ENCODE measurements at regions of chr6 and their contacts with region 1.

Region 1: DNA sequence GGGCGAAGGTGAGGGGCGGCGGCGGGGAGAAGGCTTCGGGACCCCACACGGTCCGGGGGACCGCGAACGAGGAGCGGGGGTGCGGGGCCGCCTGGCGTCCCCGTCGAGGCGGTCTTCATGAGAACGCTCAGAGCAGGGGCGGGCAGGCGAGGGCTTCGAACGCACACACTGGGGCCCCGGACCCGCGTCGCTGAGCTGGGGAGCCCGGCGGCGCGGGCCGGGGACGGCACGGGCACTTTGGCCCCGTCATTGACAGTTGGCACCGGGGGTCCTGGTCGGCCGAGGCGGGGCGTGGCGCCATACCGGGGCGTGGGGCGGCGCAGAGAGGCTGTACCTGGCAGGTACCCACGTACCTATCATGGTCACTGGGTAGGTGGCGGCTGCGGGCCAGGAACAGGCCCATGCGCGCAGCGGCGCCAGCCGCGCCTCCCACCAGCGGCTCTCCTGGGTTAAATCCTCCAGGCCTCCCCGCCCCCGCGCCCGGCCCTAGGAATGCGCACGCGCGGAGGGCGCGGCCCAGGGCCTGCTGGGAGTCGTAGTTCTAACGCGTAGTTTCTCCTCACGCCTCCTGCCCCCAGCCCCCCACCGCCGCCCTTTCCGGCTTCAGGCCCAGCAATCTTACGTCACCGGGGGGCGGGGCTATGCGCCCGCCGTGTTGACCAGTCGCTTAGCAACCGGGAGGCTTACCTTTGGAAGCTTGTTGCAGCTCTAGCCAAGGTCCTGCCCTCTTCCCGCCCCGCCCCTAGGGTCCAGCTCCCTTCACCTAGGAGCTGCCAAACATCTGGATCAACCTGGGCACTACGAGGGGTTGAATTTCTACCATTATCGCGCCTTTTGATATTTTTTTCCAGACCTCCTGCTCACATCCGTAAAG is at the starts of genes PACRG and PRKN:
- DNase-seq: peak; percentile 97
- ATAC-seq: peak; percentile 93
- H3K4me3 ChIP-seq: peak within 1 kb of the TSS; percentile 82
- H3K27ac ChIP-seq: no peak within 1 kb of the TSS
- H3K4me1 ChIP-seq: peaks cover 14% of the 10 kb centered on the region; the same call in 1 of the 2 replicates
- H3K27me3 ChIP-seq: no peaks in the 10 kb centered on the region
- CTCF ChIP-seq: no peak
- total RNA-seq, gene PACRG: not detected in 2 replicates
- total RNA-seq, gene PRKN: not detected in 2 replicates

Region 2: GRCh38 chr6:162750776-162751175 is 23.2 kb after region 1 on chr6:
- CTCF ChIA-PET with region 1: no interaction called
- POLR2A ChIA-PET with region 1: no interaction called
- intact Hi-C with region 1: loop called (anchors 1 kb)
- DNase-seq: peak; percentile 88
- ATAC-seq: peak; percentile 98
- H3K4me3 ChIP-seq: no peak overlapping the region
- H3K27ac ChIP-seq: peak overlapping the region; percentile 63
- H3K4me1 ChIP-seq: peaks cover 21% of the 10 kb centered on the region
- H3K27me3 ChIP-seq: no peaks in the 10 kb centered on the region
- CTCF ChIP-seq: peak; percentile 37; the same call in 1 of the 2 replicates

Measured in PC-3 (cell line).